Calu3 (cell line): ENCODE measurements at regions of chr12 and their contacts with region 1.

Region 1: DNA sequence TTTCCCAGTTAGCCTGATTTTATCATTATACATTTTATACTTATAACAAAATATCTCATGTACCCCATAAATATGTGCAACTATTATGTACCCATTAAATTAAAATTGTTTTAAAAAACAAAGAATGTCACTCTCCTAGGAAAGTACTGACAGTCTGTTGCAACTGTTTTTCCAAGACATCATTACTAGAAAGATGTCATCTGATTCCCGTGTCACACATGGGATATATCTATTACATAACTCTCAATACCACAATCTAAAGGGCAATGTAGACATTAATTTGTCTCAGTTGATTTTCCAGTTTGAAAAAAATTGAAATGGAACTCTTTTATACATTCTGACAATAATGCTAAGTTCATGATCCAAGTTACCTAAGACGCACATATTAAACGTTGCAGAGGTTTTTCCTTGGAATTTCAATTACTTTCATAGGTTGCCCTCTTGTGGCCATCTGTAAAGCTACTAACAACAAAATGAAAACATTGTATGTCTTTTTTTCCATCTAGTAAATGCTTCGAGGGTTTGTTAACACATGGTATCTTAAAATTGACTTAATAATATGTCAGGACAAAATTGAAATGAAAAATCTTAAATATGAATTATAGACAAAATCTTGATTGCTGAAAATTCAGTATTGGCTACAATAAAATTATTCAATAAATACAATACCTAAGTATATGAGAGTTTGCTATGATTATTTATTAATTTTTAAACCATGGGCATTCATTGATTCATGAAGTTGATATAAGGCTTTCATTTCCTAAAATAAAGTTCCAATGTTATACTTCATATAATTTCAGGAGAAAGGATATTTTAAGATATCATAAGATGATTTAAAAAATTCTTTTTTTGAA is 131.6 kb downstream of the PPFIA2 start:
- DNase-seq: peak; percentile 41
- H3K4me3 Mint-ChIP-seq: no peak overlapping the region
- H3K27ac Mint-ChIP-seq: no peak overlapping the region
- H3K4me1 Mint-ChIP-seq: no peaks in the 10 kb centered on the region
- H3K27me3 Mint-ChIP-seq: no peaks in the 10 kb centered on the region
- CTCF ChIP-seq: no peak

Region 2: DNA sequence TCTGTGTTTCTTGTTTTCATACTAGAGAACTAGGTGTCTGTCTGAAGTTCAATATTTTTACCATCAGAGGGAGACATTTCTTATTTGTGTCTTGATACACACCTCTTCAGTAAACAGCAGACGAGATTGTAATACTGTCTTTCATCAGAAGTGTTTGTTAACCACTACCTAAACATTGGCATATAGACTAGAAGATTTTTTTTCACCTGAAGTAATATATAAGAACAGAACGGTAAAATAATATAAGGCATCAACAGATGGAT is 359.0 kb before region 1 on chr12:
- CTCF ChIA-PET with region 1: no interaction called
- intact Hi-C with region 1: loop called (anchors 1 kb)
- DNase-seq: no peak
- H3K4me3 Mint-ChIP-seq: no peak overlapping the region
- H3K27ac Mint-ChIP-seq: no peak overlapping the region
- H3K4me1 Mint-ChIP-seq: no peaks in the 10 kb centered on the region
- H3K27me3 Mint-ChIP-seq: no peaks in the 10 kb centered on the region
- CTCF ChIP-seq: no peak

Region 3: DNA sequence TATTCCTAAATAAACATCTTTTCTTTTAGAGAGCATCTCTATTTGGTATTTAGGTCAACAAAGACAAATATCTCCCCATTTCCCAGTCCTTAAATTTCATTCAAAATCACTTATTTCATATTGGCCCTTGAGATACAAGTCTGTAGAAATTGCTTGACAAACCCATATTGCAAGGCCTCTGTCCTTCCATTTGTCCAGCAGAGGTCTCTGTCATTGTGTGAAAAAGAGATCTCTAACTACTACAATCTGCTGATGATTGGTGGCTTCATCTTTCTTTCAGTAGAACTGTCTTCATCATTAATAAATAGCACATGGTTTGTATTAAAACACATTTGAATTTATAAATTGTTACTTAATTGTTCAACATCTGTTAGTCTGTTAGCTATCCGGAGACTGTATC is 297.1 kb before region 1 on chr12:
- CTCF ChIA-PET with region 1: no interaction called
- intact Hi-C with region 1: loop called (anchors 2 kb)
- DNase-seq: no peak
- H3K4me3 Mint-ChIP-seq: no peak overlapping the region
- H3K27ac Mint-ChIP-seq: no peak overlapping the region
- H3K4me1 Mint-ChIP-seq: no peaks in the 10 kb centered on the region
- H3K27me3 Mint-ChIP-seq: no peaks in the 10 kb centered on the region
- CTCF ChIP-seq: no peak